Heart right ventricle (tissue), 16 donors: ENCODE measurements at regions of chr4 and their contacts with region 1.

Region 1: DNA sequence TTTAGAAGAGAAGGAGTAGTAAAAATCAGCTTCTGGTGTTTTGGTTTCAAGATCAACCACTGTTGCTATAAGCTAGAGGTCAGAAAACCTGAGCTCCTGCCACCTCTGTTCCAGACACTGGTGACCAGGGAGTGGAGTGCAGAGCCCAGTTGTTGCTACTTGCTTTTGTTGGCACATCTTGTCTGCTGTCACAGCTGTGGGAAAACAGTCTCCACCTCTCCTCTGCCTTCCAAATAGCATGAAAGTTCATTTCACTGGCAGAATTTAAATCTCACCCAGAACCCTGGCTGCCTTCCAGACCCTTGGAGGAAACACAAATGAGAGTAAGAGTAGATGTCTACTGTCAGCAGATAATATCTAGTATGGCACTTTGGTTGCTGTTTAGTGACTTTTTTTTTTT is 297.5 kb upstream of the KLF3 start:
- DNase-seq: peak; percentile 18 to 19
- ATAC-seq: peak; percentile 64 to 89 (median 80)
- H3K4me3 ChIP-seq: no peak overlapping the region
- H3K27ac ChIP-seq: peak overlapping the region in 6 of 10 donors; percentile 2 to 37 (median 12)
- H3K4me1 ChIP-seq: peaks cover 0 to 23% (median 12%) of the 10 kb centered on the region in 9 donors
- H3K27me3 ChIP-seq: no peaks in the 10 kb centered on the region
- CTCF ChIP-seq: no peak

Region 2: DNA sequence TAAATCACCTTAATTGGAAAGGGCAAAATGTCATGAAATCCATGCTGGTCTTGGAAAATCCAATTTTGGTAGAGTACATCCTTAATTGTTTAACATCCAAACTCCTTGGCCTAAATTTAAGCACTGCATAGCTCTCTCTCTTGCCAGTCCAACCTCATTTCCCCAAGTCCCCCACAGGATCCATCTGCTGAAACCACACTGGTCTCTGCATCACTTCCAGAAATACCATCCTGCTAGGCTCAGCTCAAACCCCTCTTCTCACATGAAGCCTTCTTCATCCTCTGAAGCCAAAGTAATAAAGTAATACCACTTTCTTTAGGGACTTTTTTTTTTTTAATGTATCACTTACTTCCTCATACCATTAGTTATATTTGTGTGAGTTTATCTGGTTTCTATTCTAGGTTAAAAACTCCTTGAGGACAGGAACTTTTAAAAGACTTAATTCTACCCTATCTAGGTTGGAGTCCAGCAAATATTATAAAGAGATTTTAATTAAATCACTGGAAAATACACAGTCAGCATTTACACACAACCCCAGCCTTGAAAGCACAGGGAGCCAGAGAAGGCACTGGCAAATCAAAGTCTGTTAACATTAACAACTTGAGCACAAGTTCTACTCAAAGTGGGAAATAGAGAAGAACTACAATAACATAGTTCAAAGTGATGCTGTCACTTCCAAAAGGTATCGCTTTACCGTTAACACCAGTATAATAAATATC is 280.8 kb after region 1 on chr4:
- intact Hi-C with region 1: loop called in 1 of 10 experiments (anchors 10 kb)
- DNase-seq: no peak
- ATAC-seq: no peak
- H3K4me3 ChIP-seq: no peak overlapping the region
- H3K27ac ChIP-seq: no peak overlapping the region
- H3K4me1 ChIP-seq: peaks cover 0 to 4% (median 0%) of the 10 kb centered on the region in 9 donors
- H3K27me3 ChIP-seq: no peaks in the 10 kb centered on the region
- CTCF ChIP-seq: no peak

Region 3: GRCh38 chr4:39348371-39349315 is 982.2 kb after region 1 on chr4:
- intact Hi-C with region 1: no loop called
- DNase-seq: no peak
- ATAC-seq: no peak
- H3K4me3 ChIP-seq: no peak overlapping the region
- H3K27ac ChIP-seq: no peak overlapping the region
- H3K4me1 ChIP-seq: peaks cover 0 to 18% (median 10%) of the 10 kb centered on the region in 9 donors
- H3K27me3 ChIP-seq: no peaks in the 10 kb centered on the region
- CTCF ChIP-seq: no peak